IMR-90 (cell line): ENCODE measurements at regions of chr7 and their contacts with region 1.

Region 1: DNA sequence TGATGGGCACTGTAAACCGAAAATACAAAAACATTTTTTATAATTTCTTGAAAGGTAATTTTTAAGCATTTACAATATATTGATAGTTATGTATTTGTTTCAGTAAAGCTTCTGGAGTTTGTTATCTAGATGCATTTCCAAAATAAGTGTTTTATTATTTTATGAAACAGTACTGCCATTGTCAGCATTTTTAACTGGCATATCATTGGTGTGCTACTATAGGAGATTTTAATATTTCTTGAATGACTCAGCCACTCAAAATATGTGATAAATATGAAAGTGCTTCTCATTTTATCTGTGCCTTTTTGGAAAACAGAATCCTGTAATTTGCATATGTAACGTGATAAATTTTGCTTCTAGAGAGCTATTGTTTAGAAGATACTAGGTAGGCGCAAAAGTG is 97.9 kb downstream of the ANKIB1 start:
- DNase-seq: peak; percentile 13
- ATAC-seq: peak; percentile 35; the same call in 1 of the 2 replicates
- H3K4me3 ChIP-seq: no peak overlapping the region
- H3K27ac ChIP-seq: no peak overlapping the region
- H3K4me1 ChIP-seq: peaks cover 2% of the 10 kb centered on the region; the same call in 1 of the 2 replicates
- H3K27me3 ChIP-seq: no peaks in the 10 kb centered on the region
- CTCF ChIP-seq: no peak
- POLR2A ChIP-seq: no peak
- RAD21 ChIP-seq: no peak

Region 2: DNA sequence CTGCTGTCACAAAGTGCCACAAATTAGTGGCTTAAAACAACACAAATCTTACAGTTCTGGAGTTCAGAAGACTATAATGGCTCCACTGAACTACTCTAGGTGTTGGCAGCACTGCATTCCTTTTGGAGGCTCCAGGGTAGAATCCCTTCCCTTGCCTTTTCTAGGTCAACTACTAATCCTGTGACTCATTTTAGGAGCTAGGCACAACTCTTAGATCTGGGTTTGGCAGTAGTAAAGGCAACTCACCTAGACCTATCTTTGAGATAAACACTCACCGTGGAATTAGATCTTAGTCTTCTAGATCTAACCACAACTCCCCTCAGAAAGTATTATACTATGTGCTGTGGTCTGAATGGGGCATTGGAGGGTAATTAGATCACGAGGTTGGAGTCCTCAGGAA is 37.6 kb before region 1 on chr7:
- CTCF ChIA-PET with region 1: no interaction called
- POLR2A ChIA-PET with region 1: no interaction called
- dilution Hi-C with region 1: no loop called
- in situ Hi-C with region 1: no loop called
- intact Hi-C with region 1: loop called (anchors 5 kb)
- DNase-seq: peak; percentile 11
- ATAC-seq: no peak; the same call in 1 of the 2 replicates
- H3K4me3 ChIP-seq: no peak overlapping the region
- H3K27ac ChIP-seq: no peak overlapping the region
- H3K4me1 ChIP-seq: peaks cover 3% of the 10 kb centered on the region
- H3K27me3 ChIP-seq: no peaks in the 10 kb centered on the region
- CTCF ChIP-seq: no peak
- POLR2A ChIP-seq: no peak
- RAD21 ChIP-seq: no peak